Activated CD4-positive, alpha-beta memory T cell treated with anti-CD3 and anti-CD28 coated beads, Interleukin-2, amount 10 ng/mL, durations not matched to agents 7 days and 5 days (primary cell): ENCODE measurements at regions of chr19 and their contacts with region 1.

Region 1: DNA sequence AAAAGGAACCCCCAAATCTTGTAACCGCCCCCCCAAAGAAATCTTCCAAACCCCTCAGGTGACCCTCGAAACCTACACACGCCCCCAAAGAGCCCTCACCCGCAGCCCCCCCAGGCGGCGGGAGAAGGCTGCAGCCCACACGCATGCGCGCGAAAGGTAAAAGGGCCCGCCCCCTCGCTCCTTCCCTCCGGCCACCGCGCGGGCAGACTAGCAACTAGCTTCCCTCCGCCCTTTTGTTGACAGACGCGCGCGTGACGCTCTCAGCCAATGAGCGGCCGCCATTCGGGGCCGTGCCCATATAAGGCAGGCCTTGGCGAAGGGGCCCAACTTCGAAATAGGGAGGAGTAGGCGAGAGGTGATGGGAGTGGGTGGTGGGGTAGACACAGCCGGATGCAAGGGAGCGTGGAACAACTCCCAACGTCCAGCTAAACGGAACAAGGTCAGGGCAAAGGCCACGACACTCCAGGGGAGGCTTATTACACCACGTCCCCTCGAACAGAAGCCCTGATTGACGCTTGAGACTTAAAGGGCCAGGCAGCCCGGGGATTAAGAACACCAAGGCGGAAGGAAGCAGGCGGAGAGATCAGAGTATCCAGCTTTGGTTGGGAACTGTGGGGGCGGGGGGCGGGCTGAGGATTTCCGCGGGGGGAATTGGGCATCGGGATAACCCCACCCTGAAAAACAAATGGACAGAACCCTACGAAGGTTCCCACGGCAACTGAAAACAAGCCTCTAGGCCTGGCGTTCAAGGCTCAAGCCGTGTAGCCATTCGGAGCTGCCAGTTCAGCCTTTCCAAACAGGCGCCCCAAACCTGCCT is 13.3 kb downstream of the FBXO46 start:
- DNase-seq: peak; percentile 99
- H3K4me3 Mint-ChIP-seq: peak overlapping the region; percentile 96
- H3K27ac Mint-ChIP-seq: peak overlapping the region; percentile 88
- H3K4me1 Mint-ChIP-seq: peaks cover 47% of the 10 kb centered on the region
- H3K27me3 Mint-ChIP-seq: no peaks in the 10 kb centered on the region

Region 2: GRCh38 chr19:45577111-45577905 is 140.1 kb before region 1 on chr19:
- CTCF ChIA-PET with region 1: no interaction called
- POLR2A ChIA-PET with region 1: no interaction called
- DNase-seq: no peak
- H3K4me3 Mint-ChIP-seq: no peak overlapping the region
- H3K27ac Mint-ChIP-seq: no peak overlapping the region
- H3K4me1 Mint-ChIP-seq: peaks cover 25% of the 10 kb centered on the region
- H3K27me3 Mint-ChIP-seq: no peaks in the 10 kb centered on the region

Region 3: DNA sequence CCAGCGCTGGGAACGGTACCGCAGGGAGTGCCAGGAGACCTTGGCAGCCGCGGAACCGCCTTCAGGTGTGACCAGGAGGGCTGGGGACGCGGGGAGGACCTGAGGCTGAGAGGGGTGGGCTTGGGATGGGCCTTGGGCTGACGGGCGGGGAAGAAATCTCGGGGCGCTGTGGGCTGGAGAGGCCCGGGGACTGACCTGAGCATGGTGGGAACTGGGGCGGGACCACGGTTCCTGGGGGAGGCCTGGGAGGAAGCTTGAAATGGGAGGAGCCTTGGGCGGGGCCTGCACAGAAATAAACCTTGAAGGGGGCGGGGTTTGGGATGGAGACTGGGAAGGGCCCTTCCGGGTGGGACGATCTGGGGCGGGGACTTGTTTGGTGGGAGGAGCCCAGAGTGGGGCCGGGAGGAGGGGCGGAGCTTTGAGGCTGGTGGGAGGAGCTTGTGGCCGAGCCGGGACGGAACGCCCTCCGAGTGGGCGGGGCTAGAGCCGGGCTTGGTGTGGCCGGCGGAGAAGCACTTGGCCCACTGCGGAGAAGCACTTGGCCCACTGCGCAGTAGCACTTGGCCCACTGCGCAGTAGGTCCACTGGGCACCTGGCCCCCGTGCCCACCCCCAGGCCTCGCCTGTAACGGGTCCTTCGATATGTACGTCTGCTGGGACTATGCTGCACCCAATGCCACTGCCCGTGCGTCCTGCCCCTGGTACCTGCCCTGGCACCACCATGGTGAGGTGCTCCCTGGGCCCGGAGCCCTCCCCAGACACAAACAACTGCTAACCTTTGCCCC is 46.5 kb before region 1 on chr19:
- CTCF ChIA-PET with region 1: no interaction called
- POLR2A ChIA-PET with region 1: no interaction called
- DNase-seq: peak; percentile 80
- H3K4me3 Mint-ChIP-seq: peak overlapping the region; percentile 35
- H3K27ac Mint-ChIP-seq: no peak overlapping the region
- H3K4me1 Mint-ChIP-seq: peaks cover 37% of the 10 kb centered on the region
- H3K27me3 Mint-ChIP-seq: peaks cover 24% of the 10 kb centered on the region

Region 4: GRCh38 chr19:45705115-45705514 is 12.3 kb before region 1 on chr19:
- CTCF ChIA-PET with region 1: interaction called, 8 read pairs
- POLR2A ChIA-PET with region 1: interaction called, 29 read pairs
- DNase-seq: no peak
- H3K4me3 Mint-ChIP-seq: no peak overlapping the region
- H3K27ac Mint-ChIP-seq: no peak overlapping the region
- H3K4me1 Mint-ChIP-seq: peaks cover 9% of the 10 kb centered on the region
- H3K27me3 Mint-ChIP-seq: no peaks in the 10 kb centered on the region

Region 5: GRCh38 chr19:45730389-45731288 is 13.3 kb after region 1 on chr19 and contains the start of gene FBXO46:
- CTCF ChIA-PET with region 1: interaction called, 24 read pairs
- POLR2A ChIA-PET with region 1: interaction called, 27 read pairs
- DNase-seq: peak; percentile 97
- H3K4me3 Mint-ChIP-seq: peak within 1 kb of the TSS; percentile 94
- H3K27ac Mint-ChIP-seq: peak within 1 kb of the TSS; percentile 79
- H3K4me1 Mint-ChIP-seq: peaks cover 34% of the 10 kb centered on the region
- H3K27me3 Mint-ChIP-seq: no peaks in the 10 kb centered on the region
- total RNA-seq, gene FBXO46: 34.4 to 36.4 TPM